IMR-90 (cell line): ENCODE measurements at regions of chr14 and their contacts with region 1.

Region 1: GRCh38 chr14:92585981-92586937 is 72.7 kb downstream of the RIN3 start:
- DNase-seq: peak; percentile 99
- ATAC-seq: peak; percentile 95
- H3K4me3 ChIP-seq: no peak overlapping the region
- H3K27ac ChIP-seq: peak overlapping the region; percentile 65
- H3K4me1 ChIP-seq: peaks cover 29% of the 10 kb centered on the region
- H3K27me3 ChIP-seq: no peaks in the 10 kb centered on the region
- CTCF ChIP-seq: no peak
- POLR2A ChIP-seq: no peak
- RAD21 ChIP-seq: peak; percentile 1; the same call in 1 of the 2 replicates

Region 2: DNA sequence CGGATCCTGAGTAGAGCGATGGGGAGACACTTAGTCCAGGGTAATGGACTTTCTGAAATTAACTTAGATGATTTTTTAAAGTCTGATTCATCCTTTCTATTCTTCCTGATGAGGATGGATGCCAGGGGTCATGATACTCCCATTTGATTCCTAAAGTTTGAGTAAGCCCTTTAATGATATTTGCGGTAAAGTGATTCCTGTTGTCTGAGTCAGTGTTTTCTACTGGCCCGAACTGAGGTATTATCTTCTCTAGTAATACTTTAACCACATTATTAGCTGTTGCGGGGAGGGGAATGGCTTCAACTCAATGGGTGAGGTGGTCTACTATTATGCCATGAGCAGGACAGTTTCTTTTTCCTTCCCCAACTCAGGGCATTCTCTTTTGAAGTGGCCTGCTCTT is 39.0 kb after region 1 on chr14:
- CTCF ChIA-PET with region 1: no interaction called
- POLR2A ChIA-PET with region 1: no interaction called
- dilution Hi-C with region 1: no loop called
- in situ Hi-C with region 1: no loop called
- intact Hi-C with region 1: loop called (anchors 2 kb)
- DNase-seq: peak; percentile 96
- ATAC-seq: peak; percentile 94
- H3K4me3 ChIP-seq: no peak overlapping the region
- H3K27ac ChIP-seq: peak overlapping the region; percentile 99
- H3K4me1 ChIP-seq: peaks cover 15% of the 10 kb centered on the region
- H3K27me3 ChIP-seq: no peaks in the 10 kb centered on the region
- CTCF ChIP-seq: no peak
- POLR2A ChIP-seq: no peak
- RAD21 ChIP-seq: no peak

Region 3: DNA sequence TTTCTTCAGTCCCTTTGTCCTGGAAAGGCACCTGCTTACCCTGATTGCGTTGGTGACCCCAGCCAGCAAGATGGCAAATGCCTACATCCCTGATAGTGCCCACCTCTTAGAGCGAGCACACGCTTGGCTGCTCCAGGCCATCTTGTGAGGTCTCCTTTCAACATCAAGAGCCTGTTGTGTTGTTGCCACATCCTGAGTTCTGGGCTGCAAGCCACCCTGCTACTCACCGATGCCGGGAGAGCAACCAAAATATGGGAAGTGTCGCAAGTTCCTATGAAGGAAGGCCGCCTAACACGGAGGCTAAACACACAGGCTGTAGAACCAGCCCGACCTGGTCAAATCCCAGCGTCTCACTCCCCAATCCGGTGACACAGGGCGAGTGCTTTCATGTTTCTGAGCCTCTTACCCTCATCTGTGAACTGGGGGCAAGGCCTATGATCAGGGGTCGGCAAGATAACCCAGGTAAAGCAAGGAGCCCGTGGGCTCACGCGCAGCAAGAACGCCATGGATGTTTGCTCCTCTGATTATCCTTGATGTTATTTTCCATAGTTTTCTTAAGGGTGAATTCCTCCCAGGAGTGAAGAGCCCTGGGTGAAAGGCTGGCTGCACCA is 63.8 kb after region 1 on chr14:
- CTCF ChIA-PET with region 1: no interaction called
- POLR2A ChIA-PET with region 1: no interaction called
- dilution Hi-C with region 1: no loop called
- in situ Hi-C with region 1: no loop called
- intact Hi-C with region 1: loop called (anchors 2 kb)
- DNase-seq: peak; percentile 92
- ATAC-seq: no peak; the same call in 1 of the 2 replicates
- H3K4me3 ChIP-seq: no peak overlapping the region
- H3K27ac ChIP-seq: peak overlapping the region; percentile 100
- H3K4me1 ChIP-seq: peaks cover 39% of the 10 kb centered on the region
- H3K27me3 ChIP-seq: no peaks in the 10 kb centered on the region
- CTCF ChIP-seq: no peak
- POLR2A ChIP-seq: no peak
- RAD21 ChIP-seq: no peak